BJ (cell line): ENCODE measurements at regions of chr2 and their contacts with region 1.

Region 1: DNA sequence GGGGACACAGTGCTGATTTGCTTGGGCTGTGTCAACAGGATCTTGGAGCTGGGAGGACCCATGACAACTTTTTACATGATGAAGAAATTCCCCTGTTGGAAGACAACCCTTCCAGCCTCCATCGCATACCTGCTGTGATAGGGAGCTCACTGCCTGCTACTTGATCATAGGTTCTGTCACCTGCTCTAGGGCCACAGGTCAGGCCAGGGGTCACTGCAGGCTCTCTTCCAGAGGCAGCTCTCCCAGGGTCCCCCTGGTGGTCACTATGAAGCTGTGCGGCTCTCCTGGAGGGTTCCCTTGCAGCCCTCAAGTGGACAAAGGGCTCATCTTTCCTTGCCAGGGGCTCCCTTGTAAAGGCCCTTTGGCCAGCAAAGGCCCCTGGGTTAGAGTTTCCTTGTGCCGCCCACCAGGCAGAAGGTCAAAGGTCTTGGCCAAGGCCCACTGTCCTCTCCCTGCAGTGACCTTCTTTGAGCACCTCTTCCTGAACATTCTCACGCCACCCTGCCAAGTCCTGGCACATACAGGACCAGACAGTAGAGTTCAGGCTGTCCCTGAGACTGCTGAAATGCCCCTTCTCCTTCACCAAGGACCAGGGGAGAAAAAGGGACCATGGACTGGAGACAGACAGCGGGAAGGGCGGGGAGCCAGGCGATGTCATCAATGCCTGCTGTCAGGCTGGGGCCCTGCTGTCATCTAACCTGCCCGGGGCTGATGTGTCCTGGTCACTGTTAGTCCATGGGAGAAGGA is 345.1 kb downstream of the DYSF start:
- DNase-seq: no peak
- H3K4me3 ChIP-seq: no peak overlapping the region
- H3K27me3 ChIP-seq: no peaks in the 10 kb centered on the region
- CTCF ChIP-seq: peak; percentile 89

Region 2: GRCh38 chr2:70553584-70554337 is 1244.7 kb before region 1 on chr2 and contains the start of gene TGFA:
- CTCF ChIA-PET with region 1: no interaction called
- POLR2A ChIA-PET with region 1: no interaction called
- DNase-seq: no peak
- H3K4me3 ChIP-seq: peak within 1 kb of the TSS; percentile 58
- H3K27me3 ChIP-seq: peaks cover 15% of the 10 kb centered on the region
- CTCF ChIP-seq: peak; percentile 74; the same call in 1 of the 2 replicates
- polyA plus RNA-seq, gene TGFA: 0.06 and 0.13 TPM in 2 replicates

Region 3: DNA sequence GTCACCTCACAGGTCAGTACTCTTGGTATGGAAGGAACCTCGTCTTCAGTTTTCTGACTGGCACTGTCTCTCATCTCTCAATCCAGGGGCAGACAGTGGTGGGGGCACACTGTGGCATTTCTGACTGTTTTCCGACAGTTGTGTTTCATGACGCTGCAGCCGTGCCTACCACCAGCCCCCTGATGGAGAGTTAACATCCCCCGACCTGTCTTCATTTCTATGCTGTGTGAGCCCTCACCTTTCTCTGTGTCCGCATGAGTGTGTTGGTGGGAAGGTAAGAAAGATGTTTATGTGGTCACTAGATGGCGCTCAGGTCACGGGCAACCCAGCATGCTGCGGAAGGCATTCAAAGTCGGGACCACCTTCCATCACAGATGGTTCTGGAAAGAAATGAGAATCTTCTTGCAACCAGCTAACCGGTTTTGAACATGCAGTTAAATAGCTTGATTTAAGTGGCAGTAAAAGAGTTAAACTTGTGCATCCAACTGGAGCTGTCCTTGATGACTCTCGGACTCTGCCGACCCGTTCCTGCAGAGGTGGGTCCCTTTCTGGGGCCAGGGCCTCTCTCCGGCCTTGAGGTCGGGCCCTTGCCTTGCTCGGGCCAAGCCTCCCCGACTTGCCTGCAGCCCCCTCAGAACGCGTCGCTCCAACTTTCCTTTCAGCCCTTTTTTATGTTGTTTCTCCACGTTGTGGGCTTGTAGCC is 252.7 kb before region 1 on chr2:
- CTCF ChIA-PET with region 1: interaction called, 285 read pairs
- POLR2A ChIA-PET with region 1: no interaction called
- DNase-seq: no peak
- H3K4me3 ChIP-seq: no peak overlapping the region
- H3K27me3 ChIP-seq: peaks cover 10% of the 10 kb centered on the region
- CTCF ChIP-seq: peak; percentile 79

Region 4: DNA sequence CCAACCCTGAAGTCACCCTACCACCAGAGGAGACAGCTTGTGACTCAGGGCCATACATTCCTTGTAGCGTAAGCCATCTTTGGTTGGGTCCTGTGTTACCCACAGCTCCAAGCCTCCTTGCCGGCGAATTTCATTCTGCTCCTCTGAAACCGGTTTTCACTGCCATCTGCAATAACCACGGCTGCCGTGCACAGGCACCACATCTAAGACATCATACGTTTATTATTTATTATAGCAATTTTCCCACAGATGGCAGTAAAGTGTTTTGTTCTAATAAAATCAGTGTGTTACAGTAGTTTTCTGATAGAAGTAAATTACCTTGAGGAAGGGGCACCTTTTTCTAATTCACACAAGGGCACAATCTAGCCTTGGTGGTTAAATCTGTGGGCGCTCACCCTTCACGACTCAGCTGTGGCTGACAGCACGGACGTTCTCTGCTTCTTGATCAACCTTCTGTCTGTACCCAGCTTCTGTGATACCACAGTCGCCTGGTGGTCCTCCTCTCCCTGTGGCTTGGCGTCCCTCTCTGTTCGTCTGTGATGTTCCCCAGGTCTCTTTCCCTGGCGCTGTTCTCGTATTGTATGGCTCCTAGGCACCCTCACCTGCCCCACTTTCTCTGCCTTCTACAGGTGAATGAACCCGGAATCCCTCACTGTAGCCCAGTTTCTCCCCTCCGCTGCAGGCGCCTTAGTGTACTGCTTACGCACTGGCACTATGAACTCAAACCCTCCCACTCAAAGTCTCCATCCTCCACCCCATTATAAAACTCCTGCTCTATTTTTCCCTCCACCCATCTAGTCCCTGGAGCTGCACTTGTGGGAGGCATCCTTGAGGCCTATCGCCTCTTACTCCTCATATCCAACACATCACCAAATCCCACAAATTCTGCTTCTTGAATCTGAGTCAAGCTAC is 108.3 kb before region 1 on chr2:
- CTCF ChIA-PET with region 1: interaction called, 13 read pairs
- POLR2A ChIA-PET with region 1: no interaction called
- DNase-seq: no peak
- H3K4me3 ChIP-seq: no peak overlapping the region
- H3K27me3 ChIP-seq: peaks cover 20% of the 10 kb centered on the region
- CTCF ChIP-seq: no peak

Region 5: GRCh38 chr2:71767663-71768062 is 30.8 kb before region 1 on chr2:
- CTCF ChIA-PET with region 1: no interaction called
- POLR2A ChIA-PET with region 1: no interaction called
- DNase-seq: no peak
- H3K4me3 ChIP-seq: no peak overlapping the region
- H3K27me3 ChIP-seq: peaks cover 3% of the 10 kb centered on the region; the same call in 1 of the 2 replicates
- CTCF ChIP-seq: no peak

Region 6: DNA sequence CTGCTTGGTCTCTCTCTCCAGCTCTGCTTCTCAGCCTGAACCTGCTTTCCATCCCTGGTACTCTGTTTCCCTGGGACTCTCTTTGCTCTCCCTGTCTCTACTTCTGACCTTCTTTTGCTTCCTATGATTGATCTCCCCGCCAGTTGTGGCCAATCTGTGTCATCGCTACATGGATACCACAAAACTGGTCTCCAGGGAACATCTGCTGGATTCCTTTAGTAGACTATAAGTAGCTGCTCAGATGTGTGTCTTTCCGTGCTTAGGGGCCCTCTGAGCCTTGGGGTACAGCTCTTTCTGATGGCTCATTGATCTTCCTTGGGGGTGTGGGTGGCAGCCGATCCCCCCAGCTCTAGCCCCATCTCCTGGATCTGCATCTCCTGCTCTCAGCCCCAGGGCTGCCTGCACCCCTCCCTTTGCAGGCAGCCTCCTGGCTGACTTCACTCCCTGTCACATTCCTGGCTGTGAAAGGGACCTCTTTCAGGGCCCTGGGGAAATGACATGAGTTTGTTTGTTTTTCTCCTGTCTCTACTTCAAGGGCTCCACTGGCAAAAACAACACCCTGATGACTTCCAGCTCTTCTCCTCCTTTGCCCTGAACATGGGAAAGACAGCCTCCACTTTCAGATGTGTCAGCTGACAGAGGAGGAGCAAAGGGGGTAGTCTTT is 15.5 kb after region 1 on chr2:
- CTCF ChIA-PET with region 1: interaction called, 16 read pairs
- POLR2A ChIA-PET with region 1: no interaction called
- DNase-seq: no peak
- H3K4me3 ChIP-seq: no peak overlapping the region
- H3K27me3 ChIP-seq: no peaks in the 10 kb centered on the region; the same call in 1 of the 2 replicates
- CTCF ChIP-seq: no peak

Region 7: DNA sequence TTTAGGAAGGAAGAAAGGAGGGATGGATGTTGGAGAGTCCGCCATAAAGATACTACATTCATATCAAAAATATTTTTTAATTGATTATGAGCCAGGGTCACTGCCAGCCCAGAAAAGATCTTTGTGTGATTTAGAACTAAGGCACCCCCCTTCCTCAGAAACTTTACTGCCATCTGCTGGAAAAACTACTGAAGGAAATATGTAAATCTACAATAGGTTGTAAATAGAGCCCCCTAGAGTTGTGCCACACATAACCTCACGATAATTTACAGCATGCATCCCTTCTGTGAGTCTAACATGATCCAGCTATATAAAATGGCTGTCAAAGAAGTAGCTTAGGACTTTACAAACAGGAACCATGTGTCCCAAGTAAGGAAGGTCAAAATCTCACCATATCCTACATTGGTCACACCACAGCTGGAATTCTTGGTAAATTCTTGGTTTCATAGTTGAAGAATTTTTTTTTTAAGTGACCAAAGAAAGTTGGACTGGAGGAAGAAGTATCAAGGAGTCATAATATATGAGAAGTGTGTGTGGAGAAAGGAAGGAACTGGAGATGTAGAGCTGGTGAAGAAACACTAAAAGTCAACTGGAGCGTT is 196.7 kb after region 1 on chr2:
- CTCF ChIA-PET with region 1: interaction called, 100 read pairs
- POLR2A ChIA-PET with region 1: no interaction called
- DNase-seq: no peak
- H3K4me3 ChIP-seq: no peak overlapping the region
- H3K27me3 ChIP-seq: peaks cover 5% of the 10 kb centered on the region
- CTCF ChIP-seq: peak; percentile 60

Region 8: GRCh38 chr2:72579591-72580180 is 781.2 kb after region 1 on chr2:
- CTCF ChIA-PET with region 1: interaction called, 10 read pairs
- POLR2A ChIA-PET with region 1: no interaction called
- DNase-seq: no peak
- H3K4me3 ChIP-seq: no peak overlapping the region
- H3K27me3 ChIP-seq: no peaks in the 10 kb centered on the region
- CTCF ChIP-seq: peak; percentile 62